Psoas muscle (tissue), 8 donors: ENCODE measurements at regions of chr11 and their contacts with region 1.

Region 1: DNA sequence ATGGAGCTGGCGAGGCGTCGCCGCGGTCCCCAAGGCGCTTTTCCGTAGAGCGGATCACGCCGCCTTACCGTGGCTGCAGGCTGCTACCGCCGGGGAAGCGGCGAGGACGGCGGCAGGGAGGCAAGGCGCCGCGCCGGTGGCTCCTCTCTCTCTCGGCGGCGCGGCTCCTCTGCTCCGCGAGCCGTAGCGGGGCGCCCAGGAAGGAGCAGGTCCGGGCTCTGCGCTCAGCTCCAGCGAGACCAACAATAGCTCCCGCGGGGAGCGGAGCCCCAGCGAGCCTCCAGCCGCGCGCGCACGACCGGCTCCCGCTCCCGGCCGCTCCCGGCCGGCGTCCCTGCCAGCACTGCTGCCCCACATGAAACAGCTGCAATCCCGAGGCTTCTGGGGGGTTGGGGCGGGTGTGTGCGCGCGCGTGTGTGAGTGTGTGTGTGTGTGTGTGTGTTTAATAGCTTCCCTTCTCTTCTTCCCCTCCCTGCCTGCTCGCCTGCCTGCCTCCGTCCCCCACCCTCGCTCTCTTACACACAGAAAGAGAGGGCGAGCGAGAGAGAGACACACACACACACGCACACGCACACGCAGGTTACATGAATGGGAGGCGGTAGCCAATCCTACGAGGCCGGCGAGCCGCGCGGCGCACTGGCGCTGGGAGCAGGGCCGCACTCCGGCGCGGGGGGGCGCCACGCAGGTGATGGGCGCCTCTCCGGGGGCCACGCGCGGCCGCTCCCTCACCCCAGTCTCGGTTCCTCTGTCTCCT is at the start of gene TENM4:
- DNase-seq: peak; percentile 62 to 76
- ATAC-seq: peak; percentile 64 to 71 (median 68)
- H3K4me3 ChIP-seq: peak within 1 kb of the TSS; percentile 68
- H3K27ac ChIP-seq: no peak within 1 kb of the TSS
- H3K4me1 ChIP-seq: peaks cover 18% of the 10 kb centered on the region
- H3K27me3 ChIP-seq: peaks cover 4 to 92% (median 28%) of the 10 kb centered on the region in 3 donors
- CTCF ChIP-seq: peak; percentile 5
- total RNA-seq, gene TENM4: 0.48 to 1.7 (median 0.97) TPM

Region 2: DNA sequence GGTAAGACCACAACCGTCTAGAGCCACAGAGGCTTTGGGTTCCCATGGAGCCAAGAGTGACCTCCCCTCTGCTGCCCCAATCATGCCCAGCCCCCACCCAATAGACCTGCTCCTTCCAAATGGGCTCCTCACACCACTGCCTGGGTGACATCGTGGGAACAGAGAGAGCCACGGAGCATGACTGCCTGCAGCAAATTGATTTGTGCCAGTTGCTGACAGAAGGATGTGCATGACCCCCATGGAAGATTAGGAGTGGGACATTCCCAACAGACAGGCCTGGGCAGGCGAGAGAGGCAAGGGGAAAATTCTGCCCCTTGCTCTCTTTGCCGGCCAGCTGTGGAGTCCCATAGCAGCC is 88.3 kb before region 1 on chr11:
- intact Hi-C with region 1: loop called in 1 of 2 experiments (anchors 10 kb)
- DNase-seq: no peak
- ATAC-seq: no peak
- H3K4me3 ChIP-seq: no peak overlapping the region
- H3K27ac ChIP-seq: no peak overlapping the region
- H3K4me1 ChIP-seq: no peaks in the 10 kb centered on the region
- H3K27me3 ChIP-seq: peaks cover 0 to 4% (median 1%) of the 10 kb centered on the region in 3 donors
- CTCF ChIP-seq: no peak